ENCODE measurements at regions of chr12 and their contacts with region 1.

Region 1: DNA sequence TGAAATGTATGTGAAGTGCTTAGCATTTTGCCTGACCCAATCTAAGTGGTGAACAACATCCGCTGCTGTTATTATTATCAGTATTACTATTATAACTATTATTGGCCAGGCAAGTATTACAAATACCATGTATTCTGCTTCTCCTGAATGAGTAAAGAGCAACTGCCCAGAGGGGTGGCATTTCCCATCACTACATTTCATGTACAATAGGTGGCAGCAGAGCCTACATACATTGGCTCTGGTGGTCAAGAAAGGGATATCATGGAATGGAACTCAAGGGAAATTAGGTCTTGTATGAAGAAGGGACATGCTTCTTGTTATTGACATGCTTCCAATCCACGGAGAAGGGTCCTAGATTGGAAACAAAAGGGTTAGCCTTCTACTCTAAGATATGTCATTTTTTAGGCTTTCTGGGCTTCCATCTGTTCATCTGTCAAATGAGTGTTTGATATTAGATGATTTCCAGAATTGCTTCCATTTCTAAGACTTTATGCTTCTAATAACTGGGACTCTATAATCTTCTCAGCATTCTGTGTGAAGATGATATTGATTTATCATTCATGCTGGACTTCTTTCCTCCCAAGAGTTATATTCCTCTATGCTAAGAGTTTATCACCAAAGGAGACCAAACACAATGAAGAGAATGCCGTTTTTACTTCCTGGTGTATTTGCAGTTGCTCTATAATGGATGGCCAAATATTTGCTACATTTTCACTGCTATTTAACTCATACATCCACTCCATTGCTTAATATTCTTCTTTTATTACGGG is 239.1 kb downstream of the SSPN start:
- DNase-seq: peak; percentile 90
- ATAC-seq: peak; percentile 99
- H3K4me3 ChIP-seq: no peak overlapping the region
- H3K27ac ChIP-seq: no peak overlapping the region
- H3K4me1 ChIP-seq: no peaks in the 10 kb centered on the region
- H3K27me3 ChIP-seq: no peaks in the 10 kb centered on the region
- CTCF ChIP-seq: peak; percentile 97

Region 2: GRCh38 chr12:26119391-26119981 is 315.0 kb before region 1 on chr12:
- CTCF ChIA-PET with region 1: no interaction called
- POLR2A ChIA-PET with region 1: no interaction called
- intact Hi-C with region 1: loop called (anchors 1 kb)
- DNase-seq: peak; percentile 88
- ATAC-seq: peak; percentile 23
- H3K4me3 ChIP-seq: peak overlapping the region; percentile 77
- H3K27ac ChIP-seq: peak overlapping the region; percentile 74
- H3K4me1 ChIP-seq: peaks cover 54% of the 10 kb centered on the region
- H3K27me3 ChIP-seq: no peaks in the 10 kb centered on the region
- CTCF ChIP-seq: peak; percentile 94

Region 3: GRCh38 chr12:26614020-26614616 is 179.6 kb after region 1 on chr12:
- CTCF ChIA-PET with region 1: interaction called, 4 read pairs
- POLR2A ChIA-PET with region 1: no interaction called
- intact Hi-C with region 1: loop called (anchors 1 kb)
- DNase-seq: peak; percentile 56
- ATAC-seq: peak; percentile 78
- H3K4me3 ChIP-seq: no peak overlapping the region
- H3K27ac ChIP-seq: no peak overlapping the region
- H3K4me1 ChIP-seq: no peaks in the 10 kb centered on the region
- H3K27me3 ChIP-seq: no peaks in the 10 kb centered on the region
- CTCF ChIP-seq: peak; percentile 95

Region 4: DNA sequence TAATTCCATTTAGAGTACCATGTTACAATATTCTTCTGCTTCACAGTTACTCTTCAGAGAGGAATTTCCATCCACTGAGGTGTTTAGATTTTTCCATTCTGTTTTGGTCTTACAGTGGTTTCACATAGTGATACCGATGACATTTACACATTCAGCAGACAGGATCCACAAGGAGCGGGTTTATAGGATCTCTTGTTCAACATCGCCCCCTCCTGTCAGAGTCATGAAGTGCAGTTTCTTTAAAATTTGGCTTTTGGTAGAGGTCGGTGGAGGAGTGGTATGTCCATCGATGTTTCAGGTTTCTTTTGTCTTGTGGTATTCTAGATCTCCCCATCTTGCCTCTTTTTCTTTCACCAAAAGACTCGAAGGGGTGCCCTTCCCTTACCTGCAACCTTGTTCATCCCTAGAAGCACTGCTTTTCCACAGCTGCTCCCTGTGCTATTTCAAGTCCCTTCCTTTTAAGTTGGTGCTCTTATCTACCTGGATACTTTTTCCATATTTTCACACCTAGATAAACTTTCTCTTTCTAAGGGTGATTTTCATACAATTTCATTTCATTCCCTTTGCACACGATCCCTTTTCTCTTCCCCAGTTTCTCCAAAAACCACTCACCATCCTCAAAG is 217.2 kb after region 1 on chr12:
- CTCF ChIA-PET with region 1: interaction called, 5 read pairs
- POLR2A ChIA-PET with region 1: no interaction called
- intact Hi-C with region 1: loop called (anchors 1 kb)
- DNase-seq: peak; percentile 97
- ATAC-seq: peak; percentile 85
- H3K4me3 ChIP-seq: no peak overlapping the region
- H3K27ac ChIP-seq: no peak overlapping the region
- H3K4me1 ChIP-seq: peaks cover 22% of the 10 kb centered on the region
- H3K27me3 ChIP-seq: no peaks in the 10 kb centered on the region
- CTCF ChIP-seq: peak; percentile 99

Region 5: DNA sequence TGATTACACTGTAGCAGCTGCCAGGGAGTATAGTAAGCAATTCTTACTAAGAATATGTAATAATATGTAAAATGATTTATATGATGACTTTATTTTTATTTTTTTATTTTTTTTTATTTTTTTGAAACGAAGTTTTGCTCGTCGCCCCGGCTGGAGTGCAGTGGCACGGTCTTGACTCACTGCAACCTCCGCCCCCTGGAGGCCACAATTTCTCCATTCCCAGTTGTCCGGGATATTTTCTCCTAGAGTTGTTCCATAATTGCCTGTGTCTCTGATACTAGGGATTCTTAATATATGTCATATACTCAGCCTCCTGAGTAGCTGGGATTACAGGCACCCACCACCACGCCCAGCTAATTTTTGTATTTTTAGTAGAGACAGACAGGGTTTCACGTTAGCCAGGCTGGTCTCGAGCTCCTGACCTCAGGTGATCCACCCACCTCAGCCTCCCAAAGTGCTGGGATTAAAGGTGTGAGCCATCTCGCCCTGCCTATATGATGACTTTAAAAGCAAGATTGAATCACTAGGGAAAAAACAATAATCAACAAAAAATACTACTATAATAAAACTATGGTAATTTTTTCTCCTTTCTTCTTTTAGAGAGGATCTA is 410.7 kb after region 1 on chr12:
- CTCF ChIA-PET with region 1: no interaction called
- POLR2A ChIA-PET with region 1: no interaction called
- intact Hi-C with region 1: loop called (anchors 10 kb)
- DNase-seq: peak; percentile 78
- ATAC-seq: peak; percentile 95
- H3K4me3 ChIP-seq: no peak overlapping the region
- H3K27ac ChIP-seq: no peak overlapping the region
- H3K4me1 ChIP-seq: no peaks in the 10 kb centered on the region
- H3K27me3 ChIP-seq: no peaks in the 10 kb centered on the region
- CTCF ChIP-seq: peak; percentile 70

Measured in PC-3 (cell line).